HEK293 (cell line): ENCODE measurements at regions of chr12 and their contacts with region 1.

Region 1: GRCh38 chr12:13100882-13101769 is 2.3 kb downstream of the GSG1 start:
- H3K4me3 ChIP-seq: peak overlapping the region; percentile 56
- H3K27ac ChIP-seq: peak overlapping the region; percentile 96
- H3K4me1 ChIP-seq: peaks cover 36% of the 10 kb centered on the region
- CTCF ChIP-seq: no peak; the same call in 1 of the 2 replicates

Region 2: GRCh38 chr12:13173012-13173932 is 72.1 kb after region 1 on chr12:
- CTCF ChIA-PET with region 1: no interaction called
- POLR2A ChIA-PET with region 1: no interaction called
- H3K4me3 ChIP-seq: no peak overlapping the region
- H3K27ac ChIP-seq: no peak overlapping the region
- H3K4me1 ChIP-seq: no peaks in the 10 kb centered on the region
- CTCF ChIP-seq: no peak

Region 3: DNA sequence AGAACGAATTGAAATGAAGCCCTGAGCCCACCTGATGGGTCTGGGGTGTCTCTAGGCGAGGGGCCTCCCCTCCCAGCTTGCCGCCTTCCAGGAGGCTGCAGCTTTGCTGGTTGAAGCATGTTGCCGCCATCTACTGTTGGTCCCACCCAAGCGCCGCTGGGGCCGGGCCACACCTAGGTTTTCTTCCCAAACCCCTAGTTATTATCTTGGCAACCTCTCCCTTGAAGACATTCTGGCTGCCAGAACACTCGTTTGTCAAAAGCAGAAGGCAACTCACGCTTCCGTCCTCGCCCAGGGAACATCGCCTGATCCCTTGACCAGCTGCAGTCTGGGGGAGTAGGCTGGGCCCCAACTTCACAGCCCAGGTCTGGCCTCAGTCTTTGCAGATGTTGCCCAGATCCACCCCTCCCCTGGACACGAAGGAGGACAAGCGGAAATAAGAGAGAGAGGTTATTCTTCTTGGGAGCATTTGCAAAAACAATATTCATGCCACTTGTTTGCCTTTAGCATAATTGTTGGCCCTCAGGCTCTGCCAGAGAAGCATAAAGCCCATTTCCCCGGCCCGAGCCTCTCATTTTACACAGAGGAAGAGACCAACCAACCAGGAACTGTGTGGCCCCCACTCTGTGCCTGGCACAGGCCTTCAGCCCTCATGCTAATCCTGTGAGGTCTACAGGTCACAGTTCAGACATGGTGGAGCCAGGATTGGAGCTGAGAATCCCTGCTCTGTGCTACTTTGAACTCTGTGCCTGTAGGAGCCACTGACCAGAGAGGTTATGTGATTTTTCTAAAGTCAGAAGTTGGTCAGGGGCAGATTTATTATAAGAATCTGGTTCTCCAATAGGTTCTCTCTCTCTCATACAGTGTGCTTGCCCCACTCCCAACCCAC is 102.2 kb after region 1 on chr12:
- CTCF ChIA-PET with region 1: interaction called, 25 read pairs
- POLR2A ChIA-PET with region 1: interaction called, 5 read pairs
- H3K4me3 ChIP-seq: no peak overlapping the region
- H3K27ac ChIP-seq: no peak overlapping the region
- H3K4me1 ChIP-seq: peaks cover 7% of the 10 kb centered on the region
- CTCF ChIP-seq: peak; percentile 47; the same call in 1 of the 2 replicates

Region 4: DNA sequence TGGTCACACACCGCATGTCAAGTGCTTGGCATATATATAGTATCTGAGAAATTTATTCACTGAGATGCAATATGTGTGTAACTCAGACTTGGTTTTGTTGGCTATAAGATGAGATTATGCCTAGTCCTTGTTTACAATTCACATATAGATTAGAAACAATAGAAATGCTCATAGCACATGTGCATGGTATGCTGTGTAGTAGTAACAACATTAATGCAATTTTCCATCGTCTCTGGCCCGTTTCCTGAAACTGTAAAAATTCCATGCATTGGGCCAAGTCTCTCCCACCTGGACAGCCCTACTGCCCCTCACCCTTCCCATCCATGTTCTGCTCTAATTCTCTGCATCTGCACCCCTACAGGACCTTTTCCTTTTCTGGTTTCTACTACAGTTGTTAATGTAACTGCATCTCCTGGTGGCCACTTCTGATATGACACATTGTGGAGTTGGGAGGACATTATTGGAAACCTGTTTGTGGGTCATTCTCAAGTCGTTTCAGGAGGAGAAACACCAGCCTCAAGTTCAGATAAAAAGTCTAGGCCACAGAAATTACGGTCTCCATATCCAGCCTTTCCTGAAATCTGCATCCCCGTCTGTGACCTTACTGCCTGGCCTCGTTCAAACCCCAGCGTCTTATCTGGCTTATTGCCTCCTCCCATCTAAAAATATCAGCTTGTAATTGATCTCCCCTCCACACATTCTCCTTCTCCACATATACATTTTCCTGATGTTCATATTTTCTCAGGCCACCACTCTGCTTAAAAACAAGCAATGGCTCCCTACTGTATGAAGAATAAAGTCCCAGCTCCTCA is 132.9 kb after region 1 on chr12:
- CTCF ChIA-PET with region 1: interaction called, 10 read pairs
- POLR2A ChIA-PET with region 1: no interaction called
- H3K4me3 ChIP-seq: no peak overlapping the region
- H3K27ac ChIP-seq: no peak overlapping the region
- H3K4me1 ChIP-seq: no peaks in the 10 kb centered on the region
- CTCF ChIP-seq: peak; percentile 14; the same call in 1 of the 2 replicates